ENCODE measurements at regions of chr3 and their contacts with region 1.

Region 1: GRCh38 chr3:36679384-36680200 is 84.8 kb downstream of the DCLK3 start:
- DNase-seq: no peak
- ATAC-seq: no peak
- H3K4me3 Mint-ChIP-seq: no peak overlapping the region
- H3K27ac Mint-ChIP-seq: no peak overlapping the region
- H3K4me1 Mint-ChIP-seq: peaks cover 8% of the 10 kb centered on the region
- H3K27me3 Mint-ChIP-seq: no peaks in the 10 kb centered on the region
- CTCF ChIP-seq: no peak

Region 2: DNA sequence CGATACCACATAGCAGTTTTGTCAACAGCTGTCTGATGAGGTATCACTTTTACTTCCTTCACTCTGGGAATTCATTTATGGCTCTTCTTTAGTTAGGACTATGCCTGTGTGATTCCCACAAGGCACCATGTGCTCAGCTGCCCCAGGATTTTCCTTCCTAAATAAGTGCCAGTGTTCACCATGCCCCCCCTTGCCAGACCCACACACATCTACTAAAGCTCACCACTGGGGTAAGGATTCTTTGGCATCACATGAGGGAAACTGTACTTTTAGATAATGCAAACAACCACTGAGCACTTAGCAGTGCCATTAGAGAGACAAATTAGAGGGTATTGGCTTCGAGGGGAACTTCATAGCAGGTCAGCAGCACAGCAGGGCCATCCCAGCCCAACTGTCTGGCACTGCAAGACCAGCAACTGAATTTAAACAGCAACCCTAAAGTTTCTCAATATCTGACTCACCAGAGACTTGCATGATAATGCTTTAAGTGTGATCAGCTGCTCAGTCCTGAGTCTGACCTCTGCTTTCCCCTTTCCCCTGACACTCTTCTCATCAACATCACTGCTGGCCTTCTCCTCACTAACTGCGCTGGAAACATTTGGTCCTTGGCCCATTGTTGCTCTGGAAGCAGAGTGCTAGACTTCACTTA is 185.0 kb before region 1 on chr3:
- CTCF ChIA-PET with region 1: no interaction called
- POLR2A ChIA-PET with region 1: no interaction called
- intact Hi-C with region 1: no loop called
- DNase-seq: no peak
- ATAC-seq: no peak
- H3K4me3 Mint-ChIP-seq: no peak overlapping the region
- H3K27ac Mint-ChIP-seq: no peak overlapping the region
- H3K4me1 Mint-ChIP-seq: no peaks in the 10 kb centered on the region
- H3K27me3 Mint-ChIP-seq: peaks cover 2% of the 10 kb centered on the region
- CTCF ChIP-seq: no peak

Region 3: DNA sequence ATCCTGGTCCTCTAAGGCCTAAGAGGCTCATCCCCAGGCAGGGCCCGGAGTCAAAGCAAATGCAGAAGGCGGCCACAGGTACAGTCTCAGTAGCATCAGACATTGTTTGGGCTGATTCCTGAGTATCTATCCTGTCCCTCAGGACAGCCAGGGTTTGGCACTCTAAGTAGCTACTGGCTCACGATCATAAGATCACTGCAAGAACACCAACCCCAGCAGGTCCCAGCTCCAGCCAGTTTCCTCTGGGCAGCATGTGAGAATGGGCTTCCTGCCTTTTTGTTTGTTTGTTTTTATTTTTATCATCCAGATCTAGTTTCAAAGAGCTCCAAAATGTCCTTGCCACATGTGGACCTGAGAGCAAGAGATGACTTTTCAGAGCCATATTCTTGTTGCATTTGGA is 462.1 kb after region 1 on chr3:
- CTCF ChIA-PET with region 1: no interaction called
- POLR2A ChIA-PET with region 1: interaction called, 10 read pairs
- intact Hi-C with region 1: no loop called
- DNase-seq: no peak
- ATAC-seq: no peak
- H3K4me3 Mint-ChIP-seq: no peak overlapping the region
- H3K27ac Mint-ChIP-seq: no peak overlapping the region
- H3K4me1 Mint-ChIP-seq: peaks cover 20% of the 10 kb centered on the region
- H3K27me3 Mint-ChIP-seq: no peaks in the 10 kb centered on the region
- CTCF ChIP-seq: no peak

Measured in activated B cell treated with CpG ODN at 0.5 μM for 24 hours (primary cell).